ENCODE measurements at regions of chr3 and their contacts with region 1.

Region 1: DNA sequence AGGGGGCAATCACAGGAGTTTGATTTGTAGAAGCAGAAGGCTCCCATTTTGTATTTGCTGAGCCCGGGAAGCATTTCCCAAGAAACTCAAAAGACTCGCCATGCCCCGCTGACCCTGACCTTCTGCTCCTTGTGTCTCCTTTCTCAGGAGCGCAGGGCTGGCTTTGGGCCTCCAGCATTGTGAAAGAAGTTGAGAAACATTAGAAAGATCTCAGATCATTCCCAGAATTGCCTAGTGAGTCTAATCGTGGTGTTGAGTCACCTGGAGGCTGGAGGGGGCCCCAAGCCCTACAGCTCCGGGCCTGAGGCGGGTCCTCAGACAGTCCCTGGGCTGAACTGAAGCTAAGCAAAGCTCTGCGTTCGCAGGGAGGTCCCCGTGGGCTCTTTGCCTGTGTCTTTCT is 10.9 kb upstream of the PIGZ start:
- DNase-seq: no peak
- H3K4me3 Mint-ChIP-seq: no peak overlapping the region
- H3K27ac Mint-ChIP-seq: no peak overlapping the region
- H3K4me1 Mint-ChIP-seq: peaks cover 4% of the 10 kb centered on the region
- H3K27me3 Mint-ChIP-seq: peaks cover 8% of the 10 kb centered on the region

Region 2: DNA sequence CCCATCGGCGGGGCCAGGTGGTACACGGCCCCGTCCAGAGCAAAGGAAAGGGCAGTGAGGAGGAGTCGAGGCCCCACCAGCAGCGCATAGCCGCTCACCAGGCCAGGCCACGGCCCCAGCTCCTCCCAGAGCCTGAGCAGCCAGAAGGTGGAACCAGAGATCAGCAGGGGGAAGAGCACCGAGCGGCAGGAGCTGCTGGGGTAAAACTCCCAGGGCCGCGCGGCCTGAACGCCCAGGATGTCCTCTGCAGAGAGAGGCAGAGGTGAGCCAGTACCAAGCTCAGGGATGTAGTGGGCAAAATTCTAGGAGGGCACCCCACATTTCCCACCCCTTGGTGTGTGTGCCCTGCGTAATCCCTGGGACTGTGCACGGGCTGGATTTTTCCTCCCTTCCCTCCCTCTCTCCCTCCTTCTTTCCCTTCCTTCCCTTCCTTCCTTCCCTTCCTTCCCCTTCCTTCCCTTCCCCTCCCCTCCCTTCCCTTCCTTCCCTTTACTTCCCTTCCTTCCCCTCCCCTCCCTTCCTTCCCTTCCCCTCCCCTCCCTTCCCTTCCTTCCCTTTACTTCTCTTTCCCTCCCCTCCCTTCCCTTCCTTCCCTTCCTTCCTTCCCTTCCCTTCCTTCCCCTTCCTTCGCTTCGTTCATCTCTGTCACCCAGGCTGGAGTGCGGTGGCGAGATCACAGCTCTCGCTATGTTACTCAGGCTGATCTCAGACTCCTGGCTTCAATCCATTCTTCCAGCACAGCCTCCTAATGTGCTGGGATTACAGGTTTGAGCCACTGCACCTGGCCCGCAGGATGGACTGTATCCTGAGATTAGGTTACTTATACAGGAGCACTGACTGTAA is 30.9 kb before region 1 on chr3:
- intact Hi-C with region 1: no loop called
- DNase-seq: no peak
- H3K4me3 Mint-ChIP-seq: no peak overlapping the region
- H3K27ac Mint-ChIP-seq: no peak overlapping the region
- H3K4me1 Mint-ChIP-seq: peaks cover 14% of the 10 kb centered on the region
- H3K27me3 Mint-ChIP-seq: no peaks in the 10 kb centered on the region

Region 3: GRCh38 chr3:197029511-197030167 is 50.1 kb after region 1 on chr3 and contains the start of gene MELTF:
- intact Hi-C with region 1: loop called (anchors 2 kb)
- DNase-seq: peak; percentile 71
- H3K4me3 Mint-ChIP-seq: peak within 1 kb of the TSS; percentile 74
- H3K27ac Mint-ChIP-seq: no peak within 1 kb of the TSS
- H3K4me1 Mint-ChIP-seq: no peaks in the 10 kb centered on the region
- H3K27me3 Mint-ChIP-seq: peaks cover 1% of the 10 kb centered on the region
- total RNA-seq, gene MELTF: 3.9 and 6.4 TPM in 2 replicates

Region 4: GRCh38 chr3:197186887-197187588 is 207.5 kb after region 1 on chr3:
- intact Hi-C with region 1: loop called (anchors 1 kb)
- DNase-seq: peak; percentile 5
- H3K4me3 Mint-ChIP-seq: no peak overlapping the region
- H3K27ac Mint-ChIP-seq: no peak overlapping the region
- H3K4me1 Mint-ChIP-seq: peaks cover 13% of the 10 kb centered on the region
- H3K27me3 Mint-ChIP-seq: no peaks in the 10 kb centered on the region